ENCODE measurements at regions of chr2 and their contacts with region 1.

Region 1: GRCh38 chr2:148524519-148524919 is 120.0 kb upstream of the EPC2 start:
- DNase-seq: no peak
- H3K4me3 ChIP-seq: no peak overlapping the region
- H3K27ac ChIP-seq: no peak overlapping the region
- H3K4me1 ChIP-seq: peaks cover 2 to 10% (median 6%) of the 10 kb centered on the region in 4 experiments; a peak in 5 of 7 replicates
- H3K27me3 ChIP-seq: no peaks in the 10 kb centered on the region
- CTCF ChIP-seq: no peak
- EP300 ChIP-seq: no peak
- POLR2A ChIP-seq: no peak
- RAD21 ChIP-seq: no peak

Region 2: GRCh38 chr2:148430101-148430500 is 94.4 kb before region 1 on chr2:
- CTCF ChIA-PET with region 1: no interaction called
- POLR2A ChIA-PET with region 1: no interaction called
- DNase-seq: no peak
- H3K4me3 ChIP-seq: no peak overlapping the region
- H3K27ac ChIP-seq: no peak overlapping the region
- H3K4me1 ChIP-seq: no peaks in the 10 kb centered on the region
- H3K27me3 ChIP-seq: no peaks in the 10 kb centered on the region
- CTCF ChIP-seq: no peak
- EP300 ChIP-seq: no peak
- POLR2A ChIP-seq: no peak
- RAD21 ChIP-seq: no peak

Region 3: DNA sequence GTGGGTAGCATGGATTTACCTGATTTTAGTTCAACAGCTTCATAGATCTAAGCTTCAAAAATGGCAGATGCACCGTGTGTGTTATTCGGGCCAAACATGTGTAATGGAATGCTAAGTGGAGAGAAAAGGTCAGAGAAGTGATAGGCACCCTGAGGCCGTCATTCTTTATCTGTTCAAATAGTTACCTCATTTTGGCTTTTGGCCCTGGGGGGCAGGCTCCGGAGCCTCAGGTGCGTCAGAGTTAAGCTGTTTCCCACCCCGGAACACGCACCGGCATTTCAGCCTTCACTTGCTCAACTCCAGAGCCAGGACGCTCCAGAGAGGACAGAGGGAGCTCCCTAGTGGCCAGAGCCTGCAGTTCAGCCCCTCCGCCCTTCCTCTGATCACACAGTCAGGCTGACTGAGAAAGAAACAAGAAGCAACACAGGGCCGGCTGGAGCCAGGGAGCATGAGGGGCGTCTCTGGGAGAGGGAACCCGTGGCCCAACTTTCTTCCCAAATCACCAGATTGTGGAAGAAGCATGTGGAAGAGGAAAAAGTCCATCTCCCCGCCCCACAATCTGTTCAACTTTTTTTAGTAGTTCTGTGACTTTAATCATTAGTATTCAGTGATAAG is 15.1 kb before region 1 on chr2:
- CTCF ChIA-PET with region 1: interaction called, 21 read pairs
- POLR2A ChIA-PET with region 1: no interaction called
- DNase-seq: peak; percentile 71 to 91
- H3K4me3 ChIP-seq: no peak overlapping the region
- H3K27ac ChIP-seq: no peak overlapping the region
- H3K4me1 ChIP-seq: peaks cover 0 to 2% (median 0%) of the 10 kb centered on the region in 4 experiments; a peak in 1 of 7 replicates
- H3K27me3 ChIP-seq: no peaks in the 10 kb centered on the region
- CTCF ChIP-seq: peak; percentile 91 to 96 (median 93)
- EP300 ChIP-seq: peak in 1 of 2 experiments; percentile 8; a peak in 1 of 3 replicates
- POLR2A ChIP-seq: no peak
- RAD21 ChIP-seq: peak; percentile 98 to 99

Region 4: GRCh38 chr2:148534416-148535204 is 10.1 kb after region 1 on chr2:
- CTCF ChIA-PET with region 1: interaction called, 16 read pairs
- POLR2A ChIA-PET with region 1: interaction called, 3 read pairs
- DNase-seq: no peak
- H3K4me3 ChIP-seq: no peak overlapping the region
- H3K27ac ChIP-seq: no peak overlapping the region
- H3K4me1 ChIP-seq: no peaks in the 10 kb centered on the region
- H3K27me3 ChIP-seq: no peaks in the 10 kb centered on the region
- CTCF ChIP-seq: no peak
- EP300 ChIP-seq: no peak
- POLR2A ChIP-seq: no peak
- RAD21 ChIP-seq: no peak

Region 5: GRCh38 chr2:148552675-148553331 is 28.3 kb after region 1 on chr2:
- CTCF ChIA-PET with region 1: interaction called, 18 read pairs
- POLR2A ChIA-PET with region 1: no interaction called
- DNase-seq: no peak
- H3K4me3 ChIP-seq: no peak overlapping the region
- H3K27ac ChIP-seq: no peak overlapping the region
- H3K4me1 ChIP-seq: peaks cover 5 to 16% (median 10%) of the 10 kb centered on the region in 4 experiments; a peak in 6 of 7 replicates
- H3K27me3 ChIP-seq: peaks cover 0 to 4% (median 0%) of the 10 kb centered on the region in 4 experiments; a peak in 1 of 7 replicates
- CTCF ChIP-seq: no peak
- EP300 ChIP-seq: no peak
- POLR2A ChIP-seq: no peak
- RAD21 ChIP-seq: no peak